AG04450 (cell line): ENCODE measurements at regions of chr9 and their contacts with region 1.

Region 1: DNA sequence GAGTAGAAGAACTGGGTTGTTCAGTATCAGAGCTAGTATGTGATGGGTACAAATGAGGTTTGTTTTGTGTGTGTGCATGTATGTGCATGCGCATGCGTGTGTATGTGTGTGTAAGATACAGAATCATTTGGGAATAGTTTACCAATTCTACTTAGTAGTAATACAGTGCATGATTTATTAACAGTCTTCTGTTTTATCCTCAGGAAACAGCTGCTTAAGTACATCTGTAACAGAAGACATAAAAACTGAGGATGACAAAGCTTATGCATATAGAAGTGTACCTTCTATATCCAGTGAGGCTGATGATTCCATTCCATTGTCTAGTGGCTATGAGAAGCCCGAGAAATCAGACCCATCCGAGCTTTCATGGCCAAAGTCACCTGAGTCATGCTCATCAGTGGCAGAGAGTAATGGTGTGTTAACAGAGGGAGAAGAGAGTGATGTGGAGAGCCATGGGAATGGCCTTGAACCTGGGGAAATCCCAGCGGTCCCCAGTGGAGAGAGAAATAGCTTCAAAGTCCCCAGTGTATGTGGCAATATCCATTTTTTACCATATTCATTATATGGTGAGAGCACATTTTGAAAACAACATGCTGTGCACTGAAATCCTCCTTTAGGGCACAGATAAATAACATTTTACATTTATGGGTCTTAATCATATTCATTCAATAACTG is 228.5 kb downstream of the KDM4C start:
- DNase-seq: no peak
- H3K4me3 ChIP-seq: no peak overlapping the region
- H3K27ac ChIP-seq: no peak overlapping the region
- H3K27me3 ChIP-seq: no peaks in the 10 kb centered on the region
- CTCF ChIP-seq: no peak

Region 2: GRCh38 chr9:6739218-6739617 is 247.1 kb before region 1 on chr9:
- CTCF ChIA-PET with region 1: interaction called, 14 read pairs
- POLR2A ChIA-PET with region 1: no interaction called
- DNase-seq: no peak
- H3K4me3 ChIP-seq: no peak overlapping the region
- H3K27ac ChIP-seq: no peak overlapping the region
- H3K27me3 ChIP-seq: peaks cover 2% of the 10 kb centered on the region
- CTCF ChIP-seq: peak; percentile 28